Adrenal gland (tissue), 19 donors: ENCODE measurements at regions of chr9 and their contacts with region 1.

Region 1: GRCh38 chr9:28301281-28301680 is 728.0 kb upstream of the C9orf72 start:
- DNase-seq: no peak
- H3K4me3 ChIP-seq: no peak overlapping the region
- H3K27ac ChIP-seq: no peak overlapping the region
- H3K4me1 ChIP-seq: no peaks in the 10 kb centered on the region
- H3K27me3 ChIP-seq: no peaks in the 10 kb centered on the region
- CTCF ChIP-seq: no peak
- POLR2A ChIP-seq: no peak

Region 2: GRCh38 chr9:27985714-27986113 is 315.6 kb before region 1 on chr9:
- intact Hi-C with region 1: no loop called
- DNase-seq: no peak
- H3K4me3 ChIP-seq: no peak overlapping the region
- H3K27ac ChIP-seq: no peak overlapping the region
- H3K4me1 ChIP-seq: no peaks in the 10 kb centered on the region
- H3K27me3 ChIP-seq: no peaks in the 10 kb centered on the region
- CTCF ChIP-seq: no peak
- POLR2A ChIP-seq: no peak

Region 3: DNA sequence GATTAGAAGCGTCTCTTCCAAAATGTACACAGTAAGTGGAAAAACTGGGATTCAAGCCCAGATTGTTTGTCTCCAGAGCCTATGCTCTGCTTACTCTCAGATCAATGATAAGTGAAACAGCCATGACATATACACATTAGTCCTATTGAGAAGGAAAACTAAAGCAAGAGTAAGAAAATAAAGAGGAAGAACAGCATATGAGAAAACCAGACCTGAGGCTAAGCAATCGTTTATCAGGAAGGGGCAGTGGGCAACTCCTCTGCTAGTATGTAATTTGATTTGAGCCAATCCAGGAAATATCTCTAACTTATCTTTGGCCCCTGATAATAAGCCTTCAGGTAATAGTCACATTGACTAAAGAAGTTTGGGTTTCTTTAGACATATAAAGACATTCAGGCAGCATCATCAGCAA is 61.9 kb after region 1 on chr9:
- intact Hi-C with region 1: loop called in 1 of 2 experiments (anchors 5 kb)
- DNase-seq: no peak
- H3K4me3 ChIP-seq: no peak overlapping the region
- H3K27ac ChIP-seq: no peak overlapping the region
- H3K4me1 ChIP-seq: no peaks in the 10 kb centered on the region
- H3K27me3 ChIP-seq: no peaks in the 10 kb centered on the region
- CTCF ChIP-seq: no peak
- POLR2A ChIP-seq: no peak

Region 4: DNA sequence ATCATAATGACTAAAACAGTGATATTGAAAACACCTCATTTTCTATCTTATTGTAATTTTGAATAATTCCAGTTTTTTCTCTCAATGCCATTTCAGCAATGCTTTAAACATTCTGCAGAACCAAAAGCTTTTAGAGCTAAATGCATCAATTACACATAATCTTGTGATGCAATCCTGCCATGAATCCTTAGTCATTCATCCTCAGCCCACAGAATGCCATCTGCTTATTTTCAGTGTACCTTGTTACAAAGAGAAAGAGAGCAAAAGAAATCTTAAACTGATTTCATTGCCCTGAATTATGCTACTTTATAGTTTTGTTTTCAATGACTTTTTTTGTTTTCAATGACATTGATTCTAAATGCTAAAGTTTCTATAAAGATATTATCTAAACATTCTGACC is 506.8 kb after region 1 on chr9:
- intact Hi-C with region 1: no loop called
- DNase-seq: no peak
- H3K4me3 ChIP-seq: no peak overlapping the region
- H3K27ac ChIP-seq: no peak overlapping the region
- H3K4me1 ChIP-seq: no peaks in the 10 kb centered on the region
- H3K27me3 ChIP-seq: no peaks in the 10 kb centered on the region
- CTCF ChIP-seq: no peak
- POLR2A ChIP-seq: no peak